ENCODE measurements at regions of chr10 and their contacts with region 1.

Region 1: GRCh38 chr10:4131407-4132228 is 346.6 kb upstream of the KLF6 start:
- DNase-seq: peak; percentile 37
- H3K4me3 Mint-ChIP-seq: no peak overlapping the region
- H3K27ac Mint-ChIP-seq: no peak overlapping the region
- H3K4me1 Mint-ChIP-seq: peaks cover 46% of the 10 kb centered on the region
- H3K27me3 Mint-ChIP-seq: no peaks in the 10 kb centered on the region

Region 2: DNA sequence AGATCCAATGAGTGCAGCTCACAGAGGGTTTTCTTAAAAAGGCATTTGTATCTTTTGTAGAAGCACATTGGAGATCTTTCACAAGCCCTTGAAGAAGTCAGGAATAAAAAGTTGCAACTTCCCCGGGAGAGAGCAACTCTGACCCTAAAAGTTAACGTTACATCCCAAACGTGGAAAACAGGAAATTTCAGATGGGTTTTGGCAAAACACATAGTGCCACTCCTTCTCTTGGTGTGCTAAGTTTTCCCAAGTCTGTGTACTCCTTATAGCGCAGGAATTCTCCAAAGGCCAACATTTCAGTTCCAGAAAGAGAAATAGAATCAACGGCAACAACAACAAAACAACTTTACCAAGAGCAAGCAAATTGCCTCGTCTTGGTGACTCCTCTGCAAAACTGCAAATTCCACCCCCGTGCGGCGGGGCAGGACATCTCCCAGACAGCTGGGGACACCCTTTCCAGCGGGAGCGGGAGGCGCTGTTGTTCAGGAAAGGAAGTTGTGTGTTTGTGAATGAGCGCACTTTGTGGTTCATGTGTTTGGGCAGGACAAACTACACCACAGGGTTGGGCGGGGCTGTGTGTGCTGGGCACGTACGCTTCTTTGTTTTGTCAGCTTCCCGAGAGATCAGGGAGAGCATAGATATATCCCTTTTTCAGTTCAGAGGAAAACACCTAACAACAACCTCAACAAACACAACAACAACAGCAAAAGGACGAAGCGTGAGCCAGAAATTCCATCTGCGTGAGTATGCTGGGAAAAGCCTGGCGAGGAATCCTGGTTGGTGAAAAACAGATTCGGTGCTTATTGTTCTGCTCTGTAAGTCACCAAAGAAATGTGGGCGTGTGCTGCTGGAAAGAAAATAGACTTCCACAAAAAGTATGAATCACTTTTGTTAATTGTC is 664.3 kb before region 1 on chr10:
- intact Hi-C with region 1: loop called (anchors 10 kb)
- DNase-seq: no peak
- H3K4me3 Mint-ChIP-seq: peak overlapping the region; percentile 73
- H3K27ac Mint-ChIP-seq: peak overlapping the region; percentile 92
- H3K4me1 Mint-ChIP-seq: peaks cover 63% of the 10 kb centered on the region
- H3K27me3 Mint-ChIP-seq: no peaks in the 10 kb centered on the region

Region 3: GRCh38 chr10:3785257-3785850 is 346.3 kb before region 1 on chr10:
- intact Hi-C with region 1: loop called (anchors 5 kb)
- DNase-seq: peak; percentile 99
- H3K4me3 Mint-ChIP-seq: peak overlapping the region; percentile 83
- H3K27ac Mint-ChIP-seq: peak overlapping the region; percentile 96
- H3K4me1 Mint-ChIP-seq: peaks cover 32% of the 10 kb centered on the region
- H3K27me3 Mint-ChIP-seq: no peaks in the 10 kb centered on the region

Region 4: GRCh38 chr10:3980660-3981059 is 151.0 kb before region 1 on chr10:
- intact Hi-C with region 1: loop called (anchors 1 kb)
- DNase-seq: no peak
- H3K4me3 Mint-ChIP-seq: no peak overlapping the region
- H3K27ac Mint-ChIP-seq: no peak overlapping the region
- H3K4me1 Mint-ChIP-seq: peaks cover 30% of the 10 kb centered on the region
- H3K27me3 Mint-ChIP-seq: no peaks in the 10 kb centered on the region

Region 5: DNA sequence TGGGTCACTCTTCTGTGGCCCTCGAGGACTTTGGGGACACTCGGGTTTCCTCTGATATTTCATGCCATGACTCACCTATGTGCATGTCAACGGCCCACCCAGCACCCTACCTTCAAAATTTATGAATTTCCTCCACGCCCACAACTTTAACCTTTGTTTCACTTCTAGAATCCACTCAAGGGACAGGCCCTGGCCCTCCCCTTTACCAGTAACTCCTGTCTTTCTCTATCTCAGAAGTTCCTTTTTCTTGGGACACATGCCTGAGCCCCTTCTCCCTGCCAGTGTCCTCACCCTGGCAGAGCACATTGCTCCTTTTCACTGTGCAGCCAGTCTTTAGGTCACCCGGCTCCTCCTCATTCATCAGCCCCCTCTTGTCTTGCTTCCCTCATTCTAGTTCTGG is 64.1 kb before region 1 on chr10:
- intact Hi-C with region 1: loop called (anchors 2 kb)
- DNase-seq: no peak
- H3K4me3 Mint-ChIP-seq: no peak overlapping the region
- H3K27ac Mint-ChIP-seq: no peak overlapping the region
- H3K4me1 Mint-ChIP-seq: peaks cover 17% of the 10 kb centered on the region
- H3K27me3 Mint-ChIP-seq: no peaks in the 10 kb centered on the region

Region 6: DNA sequence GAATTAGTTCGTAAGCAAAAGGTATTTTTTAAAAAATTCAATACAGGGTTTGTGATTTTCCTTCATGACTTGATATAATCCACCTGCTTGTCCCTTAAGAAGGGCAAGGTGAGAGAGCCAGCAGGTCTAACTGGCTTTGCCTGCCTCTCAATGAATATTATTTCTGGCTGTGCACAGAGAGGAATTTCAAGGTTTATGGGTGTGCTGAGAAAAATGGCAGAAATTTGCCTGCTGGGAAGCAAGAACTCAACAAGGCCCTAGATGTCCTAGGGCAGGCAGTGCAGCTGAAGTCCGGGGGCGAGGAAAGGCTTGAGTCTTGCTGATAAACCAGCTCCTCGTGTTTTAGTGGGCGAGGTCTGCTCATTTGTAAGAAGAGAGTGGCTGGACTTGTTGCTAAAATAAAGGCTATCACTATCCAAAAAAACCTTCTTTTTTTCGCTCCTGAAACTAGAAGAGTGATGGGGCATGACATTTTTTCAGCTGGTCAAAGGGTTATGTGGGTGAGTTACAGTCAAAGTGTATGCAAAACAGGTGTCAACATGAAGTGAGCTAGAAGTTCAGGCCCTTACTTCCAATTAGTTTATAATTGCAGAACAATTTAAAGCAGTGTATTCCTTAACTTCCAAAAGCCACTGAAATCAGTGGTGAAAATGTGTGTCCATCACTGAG is 39.2 kb after region 1 on chr10:
- intact Hi-C with region 1: no loop called
- DNase-seq: no peak
- H3K4me3 Mint-ChIP-seq: no peak overlapping the region
- H3K27ac Mint-ChIP-seq: no peak overlapping the region
- H3K4me1 Mint-ChIP-seq: peaks cover 1% of the 10 kb centered on the region
- H3K27me3 Mint-ChIP-seq: peaks cover 4% of the 10 kb centered on the region

Region 7: GRCh38 chr10:4183761-4184261 is 52.2 kb after region 1 on chr10:
- intact Hi-C with region 1: no loop called
- DNase-seq: no peak
- H3K4me3 Mint-ChIP-seq: no peak overlapping the region
- H3K27ac Mint-ChIP-seq: no peak overlapping the region
- H3K4me1 Mint-ChIP-seq: peaks cover 19% of the 10 kb centered on the region
- H3K27me3 Mint-ChIP-seq: no peaks in the 10 kb centered on the region

Region 8: DNA sequence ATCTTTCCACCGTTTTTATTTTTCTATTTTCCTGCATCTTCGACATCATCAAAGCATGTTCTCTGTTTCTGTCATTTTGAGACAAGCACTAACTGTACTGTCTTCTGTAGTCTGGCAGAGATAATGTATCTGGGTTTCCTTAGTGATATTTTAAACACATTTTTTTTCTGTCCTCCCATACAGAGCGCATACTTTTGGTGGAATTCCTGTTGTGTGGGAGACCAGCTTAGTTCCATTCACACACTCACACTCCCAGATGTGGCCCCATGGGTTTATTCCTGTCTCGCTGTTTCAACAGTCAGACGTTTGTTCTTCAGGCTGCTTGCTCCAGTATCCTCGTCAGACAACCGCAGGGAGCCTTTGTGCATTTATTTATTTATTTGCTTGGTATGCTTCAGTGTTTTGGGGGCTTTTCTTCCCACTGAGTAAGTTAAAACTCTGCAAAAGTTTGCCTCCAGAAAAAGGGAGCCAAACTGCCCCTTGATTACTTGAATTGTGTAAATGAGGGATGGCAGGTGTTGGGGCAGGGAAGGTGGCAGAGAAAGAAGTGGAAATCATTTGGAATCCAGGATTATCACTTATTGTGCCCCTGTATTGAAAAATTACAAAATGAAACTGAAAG is 110.2 kb after region 1 on chr10:
- intact Hi-C with region 1: loop called (anchors 1 kb)
- DNase-seq: no peak
- H3K4me3 Mint-ChIP-seq: no peak overlapping the region
- H3K27ac Mint-ChIP-seq: no peak overlapping the region
- H3K4me1 Mint-ChIP-seq: peaks cover 33% of the 10 kb centered on the region
- H3K27me3 Mint-ChIP-seq: peaks cover 3% of the 10 kb centered on the region

Region 9: GRCh38 chr10:4656576-4657182 is 525.1 kb after region 1 on chr10:
- intact Hi-C with region 1: loop called (anchors 5 kb)
- DNase-seq: no peak
- H3K4me3 Mint-ChIP-seq: no peak overlapping the region
- H3K27ac Mint-ChIP-seq: no peak overlapping the region
- H3K4me1 Mint-ChIP-seq: peaks cover 10% of the 10 kb centered on the region
- H3K27me3 Mint-ChIP-seq: peaks cover 20% of the 10 kb centered on the region

Measured in activated T-helper 2 cell treated with anti-CD3 and anti-CD28 coated beads, Interferon-gamma antibody, Interleukin-2, Interleukin-4, amounts not matched to agents 10 μg/mL and 5 μg/mL and 100 μg/mL, durations not matched to agents 14 hours and 24 hours and 36 hours (primary cell).